Adrenal gland (tissue), 19 donors: ENCODE measurements at regions of chr12 and their contacts with region 1.

Region 1: DNA sequence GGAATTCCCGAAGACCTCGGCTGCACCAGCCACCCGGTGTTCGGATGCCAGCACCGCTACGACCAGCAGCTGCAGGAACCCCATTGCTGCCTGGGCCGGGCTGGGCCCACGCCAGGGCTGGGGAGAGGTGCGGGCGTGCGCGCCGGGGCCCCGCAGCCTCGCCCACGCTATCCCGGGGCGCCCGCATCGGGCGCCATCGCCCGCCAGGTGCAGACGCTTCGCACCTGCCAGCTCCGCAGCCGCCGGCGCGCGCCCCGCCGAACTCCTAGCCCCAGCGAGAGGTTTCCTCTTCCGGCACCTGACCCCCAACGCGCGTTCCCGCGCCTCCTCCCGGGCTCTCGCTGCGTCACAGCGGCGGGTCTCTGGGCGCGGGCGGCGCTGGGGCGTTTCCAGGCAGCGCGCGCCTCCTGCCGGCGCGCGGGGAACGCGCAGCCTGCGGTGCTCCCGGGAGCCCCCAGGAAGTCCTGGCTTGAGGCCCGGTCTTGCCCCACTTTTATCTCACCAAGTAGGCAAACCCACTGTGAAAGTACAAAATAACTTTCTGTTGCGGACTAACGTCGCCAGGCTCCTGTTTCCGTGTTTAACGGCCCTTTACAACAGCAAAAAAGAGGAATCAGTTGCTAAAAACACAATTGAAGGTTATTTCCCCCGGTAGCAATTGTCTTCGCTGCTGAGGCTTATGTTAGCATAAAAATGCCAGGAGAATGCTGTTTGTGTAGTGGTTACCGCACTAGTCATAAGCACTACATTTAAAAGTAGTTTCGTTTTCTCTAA is at the start of gene TM7SF3:
- DNase-seq: peak; percentile 92 to 95 (median 94)
- H3K4me3 ChIP-seq: peak within 1 kb of the TSS; percentile 42 to 80 (median 70)
- H3K27ac ChIP-seq: peak within 1 kb of the TSS; percentile 64 to 95 (median 91)
- H3K4me1 ChIP-seq: peaks cover 33 to 55% of the 10 kb centered on the region in 2 donors
- H3K27me3 ChIP-seq: no peaks in the 10 kb centered on the region
- CTCF ChIP-seq: peak; percentile 52 to 99 (median 86)
- POLR2A ChIP-seq: peak in 1 of 2 donors; percentile 59
- total RNA-seq, gene TM7SF3: 37.7 to 197 (median 87.6) TPM

Region 2: DNA sequence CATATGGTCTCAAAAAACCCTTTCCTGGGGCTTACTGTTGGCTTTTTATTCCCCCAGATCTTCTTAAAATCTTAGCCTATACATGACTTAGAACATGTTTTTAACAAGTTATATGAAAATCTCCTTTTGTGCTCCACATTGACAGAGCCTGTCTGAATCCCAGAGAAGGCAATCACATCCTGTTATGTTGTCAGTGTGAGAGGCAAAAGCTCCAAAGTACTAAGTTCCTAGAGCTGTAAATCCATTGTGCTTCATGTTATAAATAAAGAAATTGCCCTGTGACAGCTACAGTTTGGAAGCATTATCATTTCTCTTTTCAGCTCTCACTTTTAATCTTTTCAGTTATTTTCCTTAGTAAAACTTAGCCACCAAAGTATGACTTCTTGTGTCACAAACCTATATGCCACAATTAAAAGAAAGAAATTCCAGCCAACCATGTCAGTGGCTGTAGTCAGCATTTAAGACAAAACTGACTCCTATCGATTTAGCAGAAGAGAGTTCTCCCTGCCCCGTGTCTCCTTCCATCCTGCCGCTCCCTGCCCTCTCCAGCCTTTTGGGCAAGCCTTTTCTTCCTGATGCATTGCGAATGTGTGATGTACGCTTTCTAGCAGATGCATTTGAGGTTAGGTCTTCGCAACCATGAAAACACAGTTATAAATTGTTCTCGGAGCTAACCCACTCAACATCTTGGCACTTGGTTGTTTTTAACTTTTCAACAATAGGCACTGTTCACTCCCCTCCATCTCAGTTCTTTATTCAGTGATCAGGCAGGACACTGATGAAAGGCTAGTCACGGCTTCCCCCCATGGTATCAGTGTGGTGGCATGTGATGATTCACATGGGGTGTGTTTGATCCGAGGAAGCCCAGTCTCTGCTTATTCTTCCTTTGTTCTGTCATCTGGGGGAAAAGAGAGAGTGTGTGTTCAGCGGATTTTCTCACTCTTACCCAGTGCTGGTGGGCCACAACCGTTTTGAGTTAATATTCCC is 675.4 kb before region 1 on chr12:
- intact Hi-C with region 1: no loop called
- DNase-seq: no peak
- H3K4me3 ChIP-seq: no peak overlapping the region
- H3K27ac ChIP-seq: no peak overlapping the region
- H3K4me1 ChIP-seq: no peaks in the 10 kb centered on the region
- H3K27me3 ChIP-seq: no peaks in the 10 kb centered on the region
- CTCF ChIP-seq: no peak
- POLR2A ChIP-seq: no peak

Region 3: DNA sequence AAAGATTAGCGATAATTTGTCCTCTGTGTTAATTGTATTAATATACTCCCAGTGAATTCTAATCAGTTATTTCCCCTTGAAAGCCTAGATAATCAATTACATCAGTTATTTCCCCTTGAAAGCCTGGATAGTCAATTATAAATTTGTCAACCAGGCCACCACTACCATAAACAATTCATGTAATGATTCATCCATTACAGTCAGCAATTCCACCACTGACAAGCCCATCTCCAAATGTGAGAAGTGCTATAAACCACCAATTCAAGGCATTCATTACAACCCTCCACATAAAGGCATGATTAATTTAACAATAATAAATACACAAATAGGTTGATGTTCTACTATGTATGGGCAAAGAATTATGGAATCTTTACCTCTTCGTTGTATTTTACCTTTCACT is 117.4 kb before region 1 on chr12:
- intact Hi-C with region 1: no loop called
- DNase-seq: no peak
- H3K4me3 ChIP-seq: no peak overlapping the region
- H3K27ac ChIP-seq: no peak overlapping the region
- H3K4me1 ChIP-seq: no peaks in the 10 kb centered on the region
- H3K27me3 ChIP-seq: no peaks in the 10 kb centered on the region
- CTCF ChIP-seq: no peak
- POLR2A ChIP-seq: no peak

Region 4: DNA sequence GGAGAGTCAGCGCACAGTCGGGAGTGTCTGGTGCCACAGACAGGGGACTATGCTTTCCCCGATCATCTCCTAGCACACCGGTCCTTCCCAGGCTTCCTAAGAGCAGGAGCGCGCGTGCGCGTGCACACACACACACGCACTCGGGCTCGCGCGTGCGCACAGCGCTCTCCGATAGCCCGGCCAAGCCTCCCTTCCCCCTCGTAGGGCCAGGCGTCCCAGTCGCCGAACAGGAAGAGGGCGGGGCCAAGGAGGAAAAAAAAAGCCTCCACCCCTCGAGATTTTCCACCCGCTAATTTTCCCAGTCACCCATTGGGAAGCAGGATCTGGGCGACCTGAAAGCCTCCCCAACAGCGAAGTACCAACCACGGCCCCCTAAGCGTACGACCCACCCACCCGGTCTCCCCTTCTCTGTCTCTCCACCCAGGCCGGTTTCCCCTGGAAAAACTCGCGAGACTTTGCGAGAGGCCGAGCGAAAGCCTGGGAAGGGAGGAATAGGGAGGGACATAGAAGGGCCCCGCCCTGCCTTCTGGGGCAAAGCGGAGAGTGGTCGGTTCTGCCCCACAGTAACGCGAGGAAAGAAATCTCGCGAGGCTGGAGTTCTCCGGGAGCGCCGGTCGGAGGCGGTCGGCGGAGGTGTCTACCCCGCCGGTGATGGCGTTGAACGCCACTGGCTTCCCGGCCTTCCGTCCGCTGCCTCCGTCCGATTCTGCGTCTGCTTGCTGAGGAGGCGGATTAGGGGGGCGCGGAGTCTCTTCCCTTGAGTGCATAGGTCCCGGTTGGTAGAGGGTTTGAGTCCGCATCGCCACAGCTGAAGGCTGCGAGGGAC is 76.2 kb before region 1 on chr12 and contains the starts of genes FGFR1OP2 and INTS13:
- intact Hi-C with region 1: loop called in 1 of 2 experiments (anchors 10 kb)
- DNase-seq: peak; percentile 99 to 100 (median 99)
- H3K4me3 ChIP-seq: peak within 1 kb of the TSS; percentile 36 to 94 (median 84)
- H3K27ac ChIP-seq: peak within 1 kb of the TSS; percentile 87 to 97 (median 94)
- H3K4me1 ChIP-seq: peaks cover 15 to 60% of the 10 kb centered on the region in 2 donors
- H3K27me3 ChIP-seq: no peaks in the 10 kb centered on the region
- CTCF ChIP-seq: no peak
- POLR2A ChIP-seq: peak; percentile 97 to 98
- total RNA-seq, gene FGFR1OP2: 43.5 to 154 (median 71.7) TPM
- total RNA-seq, gene INTS13: 22.7 to 54.4 (median 33.0) TPM

Region 5: GRCh38 chr12:27123642-27124041 is 109.4 kb after region 1 on chr12:
- intact Hi-C with region 1: loop called in 1 of 2 experiments (anchors 10 kb)
- DNase-seq: no peak
- H3K4me3 ChIP-seq: no peak overlapping the region
- H3K27ac ChIP-seq: no peak overlapping the region
- H3K4me1 ChIP-seq: no peaks in the 10 kb centered on the region
- H3K27me3 ChIP-seq: no peaks in the 10 kb centered on the region
- CTCF ChIP-seq: peak; percentile 12 to 62 (median 44)
- POLR2A ChIP-seq: no peak

Region 6: GRCh38 chr12:27293463-27293862 is 279.2 kb after region 1 on chr12:
- intact Hi-C with region 1: loop called in 1 of 2 experiments (anchors 10 kb)
- DNase-seq: peak; percentile 65 to 84 (median 76)
- H3K4me3 ChIP-seq: no peak overlapping the region
- H3K27ac ChIP-seq: peak overlapping the region in 3 of 5 donors; percentile 46 to 68 (median 51)
- H3K4me1 ChIP-seq: peaks cover 38 to 51% of the 10 kb centered on the region in 2 donors
- H3K27me3 ChIP-seq: no peaks in the 10 kb centered on the region
- CTCF ChIP-seq: no peak
- POLR2A ChIP-seq: no peak

Region 7: DNA sequence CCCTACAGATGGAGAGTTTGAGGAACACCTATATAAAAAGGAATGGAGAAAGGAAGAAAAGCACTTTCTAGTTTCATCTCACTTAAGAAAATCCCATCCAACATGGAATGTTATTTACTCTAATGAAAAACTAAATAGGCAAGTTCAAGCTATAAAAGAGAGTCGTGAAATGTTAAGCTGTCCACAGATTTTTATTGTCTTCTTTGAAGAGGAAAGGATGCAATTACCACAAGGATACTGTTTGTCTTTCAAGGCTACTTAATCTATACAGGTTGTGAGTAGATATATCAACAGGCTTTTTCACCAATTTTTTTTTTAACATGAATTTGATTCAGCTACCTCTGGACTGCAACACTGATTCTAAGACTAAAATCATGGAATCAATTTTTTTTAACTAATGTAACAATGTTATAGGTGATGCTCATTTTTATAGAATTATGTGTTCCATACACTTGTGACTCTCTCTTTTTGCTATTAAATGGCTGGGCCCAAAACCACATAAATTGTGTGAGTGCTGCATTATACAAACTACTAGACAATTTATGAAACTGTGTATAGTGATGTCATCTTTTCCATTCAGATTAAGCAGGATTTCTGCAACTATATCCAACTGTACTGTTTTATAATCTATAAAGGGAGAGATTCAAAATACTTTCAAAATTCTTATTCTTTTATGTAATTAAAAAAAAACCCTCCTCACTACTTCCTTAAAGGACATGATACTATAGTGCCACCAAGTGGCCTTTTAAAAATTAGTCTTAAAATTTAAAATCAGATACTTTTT is 291.6 kb after region 1 on chr12:
- intact Hi-C with region 1: loop called in 1 of 2 experiments (anchors 10 kb)
- DNase-seq: no peak
- H3K4me3 ChIP-seq: no peak overlapping the region
- H3K27ac ChIP-seq: peak overlapping the region in 1 of 5 donors; percentile 2
- H3K4me1 ChIP-seq: no peaks in the 10 kb centered on the region
- H3K27me3 ChIP-seq: no peaks in the 10 kb centered on the region
- CTCF ChIP-seq: peak; percentile 40 to 74 (median 60)
- POLR2A ChIP-seq: no peak